MCF 10A (cell line): ENCODE measurements at regions of chrX and their contacts with region 1.

Region 1: DNA sequence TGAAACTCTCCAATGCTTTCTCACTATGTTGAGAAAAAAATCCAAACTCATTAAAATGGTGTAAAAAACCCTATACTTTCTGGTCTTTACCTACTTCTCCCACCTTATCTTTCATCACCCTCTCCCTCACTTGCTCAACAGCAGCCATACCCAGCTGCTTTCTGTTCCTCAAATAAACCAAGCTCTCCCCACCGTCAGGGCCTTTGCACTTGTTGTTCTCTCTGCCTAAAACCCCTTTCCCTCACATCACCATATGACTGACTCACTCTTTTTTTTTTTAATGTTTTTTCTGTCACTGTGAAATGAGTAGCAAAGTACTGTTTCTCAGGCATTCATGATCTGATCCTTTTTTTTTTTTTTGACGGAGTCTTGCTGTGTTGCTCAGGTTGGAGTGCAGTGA is 122.3 kb upstream of the TMEM164 start:
- DNase-seq: no peak
- H3K4me3 Mint-ChIP-seq: no peak overlapping the region
- H3K27ac Mint-ChIP-seq: no peak overlapping the region
- H3K4me1 Mint-ChIP-seq: no peaks in the 10 kb centered on the region
- H3K27me3 Mint-ChIP-seq: peaks cover 59% of the 10 kb centered on the region
- CTCF ChIP-seq: no peak

Region 2: DNA sequence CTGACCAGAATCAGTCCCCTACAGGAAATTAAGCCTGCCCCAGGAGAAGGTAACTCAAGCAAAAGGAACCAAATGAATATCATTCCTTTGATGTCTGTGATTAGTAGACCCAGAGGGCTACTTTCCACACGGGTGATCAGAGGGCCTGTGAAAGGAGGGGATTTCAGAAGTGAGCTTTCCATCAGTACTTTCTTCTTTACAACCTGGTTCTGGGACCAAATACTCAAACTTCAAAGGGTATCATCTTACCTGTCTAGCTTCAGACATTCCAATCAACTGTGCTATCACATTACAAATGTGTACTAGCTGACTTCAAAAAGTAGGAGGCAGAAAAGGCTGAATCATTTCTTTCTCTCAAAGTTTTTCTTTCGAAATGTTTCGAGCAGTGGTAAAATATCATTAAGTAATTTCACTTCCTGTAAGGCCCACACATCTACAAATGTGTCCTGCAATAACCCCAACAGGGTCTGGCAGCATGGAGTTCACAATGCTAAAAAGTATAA is 171.4 kb before region 1 on chrX:
- CTCF ChIA-PET with region 1: interaction called, 11 read pairs
- POLR2A ChIA-PET with region 1: no interaction called
- intact Hi-C with region 1: no loop called
- DNase-seq: peak; percentile 58
- H3K4me3 Mint-ChIP-seq: no peak overlapping the region
- H3K27ac Mint-ChIP-seq: peak overlapping the region; percentile 42
- H3K4me1 Mint-ChIP-seq: peaks cover 10% of the 10 kb centered on the region
- H3K27me3 Mint-ChIP-seq: peaks cover 14% of the 10 kb centered on the region
- CTCF ChIP-seq: no peak